HepG2 (cell line): ENCODE measurements at regions of chr1 and their contacts with region 1.

Region 1: GRCh38 chr1:223081181-223081994 is 61.7 kb downstream of the TLR5 start:
- DNase-seq: peak; percentile 88
- ATAC-seq: peak; percentile 98
- H3K4me3 ChIP-seq: peak overlapping the region; percentile 6 to 67 (median 34); a peak in 5 of 6 replicates
- H3K27ac ChIP-seq: no peak overlapping the region
- H3K4me1 ChIP-seq: no peaks in the 10 kb centered on the region
- H3K27me3 ChIP-seq: peaks cover 0 to 11% of the 10 kb centered on the region in 2 experiments; a peak in 2 of 5 replicates
- CTCF ChIP-seq: peak; percentile 98
- EP300 ChIP-seq: peak in 1 of 2 experiments; percentile 25; a peak in 2 of 4 replicates
- POLR2A ChIP-seq: no peak
- RAD21 ChIP-seq: peak; percentile 99

Region 2: DNA sequence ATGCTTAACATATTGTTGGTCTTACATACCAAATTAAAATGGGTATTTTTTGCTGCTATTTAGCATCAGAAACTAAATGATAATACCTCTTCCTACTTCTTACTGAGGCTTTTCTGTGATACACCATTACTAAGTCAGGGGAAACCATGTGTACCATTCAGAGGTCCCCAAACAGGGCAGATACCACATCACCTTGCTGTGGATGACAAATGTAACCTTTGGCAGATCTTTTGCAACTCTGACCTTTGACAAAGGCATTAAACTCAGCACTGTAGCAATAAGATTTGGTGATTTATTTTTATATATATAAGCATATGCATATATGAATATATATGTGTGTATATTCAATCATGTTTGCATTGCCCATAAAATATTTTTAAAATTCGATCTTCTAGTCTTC is 341.5 kb before region 1 on chr1:
- CTCF ChIA-PET with region 1: interaction called, 5 read pairs
- POLR2A ChIA-PET with region 1: no interaction called
- in situ Hi-C with region 1: no loop called
- intact Hi-C with region 1: loop called (anchors 1 kb)
- DNase-seq: no peak
- ATAC-seq: 0 out of 3 replicates have a peak, but pooled peaks have one; percentile 28
- H3K4me3 ChIP-seq: no peak overlapping the region
- H3K27ac ChIP-seq: no peak overlapping the region
- H3K4me1 ChIP-seq: no peaks in the 10 kb centered on the region
- H3K27me3 ChIP-seq: no peaks in the 10 kb centered on the region
- CTCF ChIP-seq: no peak
- EP300 ChIP-seq: no peak
- POLR2A ChIP-seq: no peak
- RAD21 ChIP-seq: no peak

Region 3: DNA sequence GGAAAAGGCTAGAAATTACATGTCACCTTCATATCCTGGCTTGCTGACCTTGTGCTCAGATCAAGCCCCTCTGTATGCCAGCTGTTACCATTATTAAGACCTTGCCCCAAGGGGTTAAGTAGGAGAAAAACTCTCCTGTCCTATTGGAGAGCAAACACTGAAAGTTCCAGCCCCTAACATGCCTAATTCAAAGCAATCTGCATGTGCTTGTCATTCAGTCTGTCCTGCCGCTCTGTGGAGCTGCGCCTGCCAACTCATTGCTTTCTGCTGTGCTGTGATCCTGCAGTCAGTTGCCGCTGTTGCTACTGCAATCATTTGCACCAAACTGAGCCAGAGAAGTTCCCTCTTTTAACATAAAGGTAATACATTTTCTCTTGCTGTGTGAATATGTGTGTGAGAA is 153.2 kb before region 1 on chr1:
- CTCF ChIA-PET with region 1: no interaction called
- POLR2A ChIA-PET with region 1: no interaction called
- in situ Hi-C with region 1: no loop called
- intact Hi-C with region 1: loop called (anchors 10 kb)
- DNase-seq: peak; percentile 49
- ATAC-seq: peak; percentile 98
- H3K4me3 ChIP-seq: peak overlapping the region in 1 of 3 experiments; percentile 40; a peak in 1 of 6 replicates
- H3K27ac ChIP-seq: peak overlapping the region; percentile 21
- H3K4me1 ChIP-seq: peaks cover 21% of the 10 kb centered on the region
- H3K27me3 ChIP-seq: no peaks in the 10 kb centered on the region
- CTCF ChIP-seq: no peak
- EP300 ChIP-seq: no peak
- POLR2A ChIP-seq: no peak
- RAD21 ChIP-seq: no peak

Region 4: GRCh38 chr1:223039990-223040389 is 41.4 kb before region 1 on chr1:
- CTCF ChIA-PET with region 1: no interaction called
- POLR2A ChIA-PET with region 1: no interaction called
- in situ Hi-C with region 1: no loop called
- intact Hi-C with region 1: loop called (anchors 1 kb)
- DNase-seq: peak; percentile 74
- ATAC-seq: peak; percentile 97
- H3K4me3 ChIP-seq: peak overlapping the region in 1 of 3 experiments; percentile 15; a peak in 1 of 6 replicates
- H3K27ac ChIP-seq: no peak overlapping the region
- H3K4me1 ChIP-seq: peaks cover 27% of the 10 kb centered on the region
- H3K27me3 ChIP-seq: no peaks in the 10 kb centered on the region
- CTCF ChIP-seq: no peak
- EP300 ChIP-seq: peak in 1 of 2 experiments; percentile 48; a peak in 1 of 4 replicates
- POLR2A ChIP-seq: no peak
- RAD21 ChIP-seq: no peak

Region 5: GRCh38 chr1:223189903-223190724 is 108.7 kb after region 1 on chr1:
- CTCF ChIA-PET with region 1: no interaction called
- POLR2A ChIA-PET with region 1: no interaction called
- in situ Hi-C with region 1: no loop called
- intact Hi-C with region 1: no loop called
- DNase-seq: no peak
- ATAC-seq: no peak
- H3K4me3 ChIP-seq: no peak overlapping the region
- H3K27ac ChIP-seq: no peak overlapping the region
- H3K4me1 ChIP-seq: no peaks in the 10 kb centered on the region
- H3K27me3 ChIP-seq: peaks cover 2 to 10% of the 10 kb centered on the region in 2 experiments; a peak in 2 of 5 replicates
- CTCF ChIP-seq: no peak
- EP300 ChIP-seq: no peak
- POLR2A ChIP-seq: no peak
- RAD21 ChIP-seq: no peak

Region 6: GRCh38 chr1:223378754-223379153 is 297.4 kb after region 1 on chr1:
- CTCF ChIA-PET with region 1: no interaction called
- POLR2A ChIA-PET with region 1: no interaction called
- in situ Hi-C with region 1: no loop called
- intact Hi-C with region 1: no loop called
- DNase-seq: no peak
- ATAC-seq: no peak
- H3K4me3 ChIP-seq: no peak overlapping the region
- H3K27ac ChIP-seq: no peak overlapping the region
- H3K4me1 ChIP-seq: no peaks in the 10 kb centered on the region
- H3K27me3 ChIP-seq: no peaks in the 10 kb centered on the region; a peak in 1 of 5 replicates
- CTCF ChIP-seq: no peak
- EP300 ChIP-seq: no peak
- POLR2A ChIP-seq: no peak
- RAD21 ChIP-seq: no peak